Activated CD4-positive, alpha-beta T cell treated with anti-CD3 and anti-CD28 coated beads, Interleukin-2, amount 10 ng/mL, durations not matched to agents 24 days and 14 days (primary cell): ENCODE measurements at regions of chr10 and their contacts with region 1.

Region 1: GRCh38 chr10:63720072-63720537 is 198.9 kb downstream of the REEP3 start:
- DNase-seq: peak; percentile 85
- H3K4me3 Mint-ChIP-seq: peak overlapping the region; percentile 60
- H3K27ac Mint-ChIP-seq: no peak overlapping the region
- H3K4me1 Mint-ChIP-seq: peaks cover 22% of the 10 kb centered on the region
- H3K27me3 Mint-ChIP-seq: peaks cover 8% of the 10 kb centered on the region

Region 2: GRCh38 chr10:63166742-63167258 is 553.3 kb before region 1 on chr10:
- intact Hi-C with region 1: loop called (anchors 1 kb)
- DNase-seq: peak; percentile 82
- H3K4me3 Mint-ChIP-seq: no peak overlapping the region
- H3K27ac Mint-ChIP-seq: no peak overlapping the region
- H3K4me1 Mint-ChIP-seq: peaks cover 33% of the 10 kb centered on the region
- H3K27me3 Mint-ChIP-seq: no peaks in the 10 kb centered on the region

Region 3: DNA sequence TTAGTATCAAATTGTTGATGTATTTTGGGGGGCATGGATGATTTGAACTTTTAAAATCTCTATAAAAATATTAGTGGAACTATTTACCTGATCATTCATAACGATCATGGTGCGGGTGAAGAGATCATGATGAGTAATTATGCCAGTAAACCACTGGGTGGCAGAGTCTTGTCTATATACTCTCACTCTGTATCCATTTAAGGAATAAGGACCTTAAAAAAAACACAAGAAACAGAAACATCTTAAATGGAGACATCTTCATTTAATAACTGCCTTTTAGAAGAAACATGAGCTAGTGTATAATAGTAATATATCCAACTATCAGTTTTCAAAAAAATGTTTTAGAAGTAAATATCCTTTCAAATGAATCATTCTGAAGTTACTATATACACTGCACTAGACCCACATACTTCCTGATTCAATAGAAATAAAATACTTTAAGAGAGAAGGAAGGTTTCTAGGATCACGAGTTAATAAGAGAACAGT is 502.9 kb before region 1 on chr10:
- intact Hi-C with region 1: loop called (anchors 2 kb)
- DNase-seq: peak; percentile 75
- H3K4me3 Mint-ChIP-seq: peak overlapping the region; percentile 15
- H3K27ac Mint-ChIP-seq: no peak overlapping the region
- H3K4me1 Mint-ChIP-seq: peaks cover 46% of the 10 kb centered on the region
- H3K27me3 Mint-ChIP-seq: no peaks in the 10 kb centered on the region

Region 4: GRCh38 chr10:63521416-63522276 is 198.5 kb before region 1 on chr10:
- intact Hi-C with region 1: loop called (anchors 2 kb)
- DNase-seq: peak; percentile 87
- H3K4me3 Mint-ChIP-seq: peak overlapping the region; percentile 91
- H3K27ac Mint-ChIP-seq: peak overlapping the region; percentile 94
- H3K4me1 Mint-ChIP-seq: peaks cover 52% of the 10 kb centered on the region
- H3K27me3 Mint-ChIP-seq: no peaks in the 10 kb centered on the region

Region 5: DNA sequence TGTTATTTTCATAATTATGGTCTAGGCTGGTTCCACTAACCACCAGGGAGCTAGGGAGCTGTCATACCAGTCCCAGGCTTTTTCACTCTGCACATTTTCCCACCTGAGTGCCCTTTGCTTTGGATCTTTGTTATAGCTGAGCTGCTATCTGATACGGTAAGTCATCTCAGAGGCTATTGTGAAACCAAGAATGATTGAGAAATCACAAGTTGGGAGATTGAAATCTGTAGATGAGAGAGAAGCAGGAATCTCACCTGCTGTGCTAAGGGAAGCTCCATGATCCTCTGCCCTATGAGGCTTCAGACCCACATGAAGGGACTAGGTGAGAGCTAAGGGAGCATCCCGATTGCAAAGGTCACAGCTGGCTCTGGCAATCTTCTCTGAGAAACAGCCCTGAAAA is 108.9 kb after region 1 on chr10:
- intact Hi-C with region 1: no loop called
- DNase-seq: no peak
- H3K4me3 Mint-ChIP-seq: no peak overlapping the region
- H3K27ac Mint-ChIP-seq: no peak overlapping the region
- H3K4me1 Mint-ChIP-seq: no peaks in the 10 kb centered on the region
- H3K27me3 Mint-ChIP-seq: peaks cover 1% of the 10 kb centered on the region